ENCODE measurements at regions of chr4 and their contacts with region 1.

Region 1: GRCh38 chr4:186845137-186845842 is 121.6 kb upstream of the FAT1 start:
- DNase-seq: peak; percentile 95
- H3K4me3 ChIP-seq: peak overlapping the region in 1 of 3 experiments; percentile 34
- H3K27ac ChIP-seq: peak overlapping the region; percentile 95
- H3K4me1 ChIP-seq: peaks cover 31% of the 10 kb centered on the region
- H3K27me3 ChIP-seq: no peaks in the 10 kb centered on the region
- CTCF ChIP-seq: no peak
- POLR2A ChIP-seq: peak; percentile 18

Region 2: DNA sequence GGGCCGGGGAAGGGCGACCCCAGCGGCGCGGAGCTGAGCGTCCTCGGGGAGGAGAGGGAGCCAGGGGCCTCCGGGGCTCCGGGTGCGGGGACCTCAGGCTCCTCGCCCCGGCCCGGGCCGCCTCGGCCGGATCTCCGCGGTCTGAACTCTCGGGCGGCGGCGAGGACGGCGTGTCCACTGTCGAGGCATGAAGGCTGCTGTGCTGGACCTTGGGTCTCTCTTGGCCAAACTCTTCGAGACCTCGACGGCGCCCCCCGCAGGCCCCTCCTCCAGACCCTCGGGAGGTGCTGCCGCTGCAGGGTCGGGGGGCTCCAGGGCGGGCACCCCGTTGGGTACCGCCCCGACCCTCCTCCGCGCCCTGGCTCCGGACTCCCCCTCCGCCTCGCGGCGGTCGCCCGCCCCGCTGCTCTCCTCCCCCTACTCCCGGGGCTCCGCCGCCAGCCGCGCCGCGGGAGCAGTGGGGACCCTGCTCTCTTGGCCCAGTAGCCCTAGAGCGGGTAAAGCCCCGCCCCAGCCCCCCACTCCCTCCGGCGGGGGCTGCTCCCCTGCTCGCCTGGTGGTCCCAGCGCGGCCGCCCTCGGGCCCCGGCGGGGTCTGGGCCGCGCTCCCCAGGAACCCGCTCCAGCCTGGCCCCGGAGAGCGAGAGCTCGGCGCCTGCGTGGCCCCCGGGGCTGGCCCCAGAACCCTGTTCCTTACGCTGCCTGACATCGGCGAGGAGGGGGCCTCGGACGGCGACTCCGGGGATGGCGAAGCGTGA is 740.2 kb before region 1 on chr4:
- CTCF ChIA-PET with region 1: no interaction called
- POLR2A ChIA-PET with region 1: no interaction called
- dilution Hi-C with region 1: no loop called
- intact Hi-C with region 1: no loop called
- DNase-seq: no peak
- H3K4me3 ChIP-seq: peak overlapping the region in 2 of 3 experiments; percentile 12 to 26
- H3K27ac ChIP-seq: no peak overlapping the region
- H3K4me1 ChIP-seq: peaks cover 3% of the 10 kb centered on the region
- H3K27me3 ChIP-seq: peaks cover 28 to 33% of the 10 kb centered on the region in 2 experiments
- CTCF ChIP-seq: no peak
- POLR2A ChIP-seq: no peak

Region 3: GRCh38 chr4:186876961-186877626 is 31.8 kb after region 1 on chr4:
- CTCF ChIA-PET with region 1: no interaction called
- POLR2A ChIA-PET with region 1: no interaction called
- dilution Hi-C with region 1: no loop called
- intact Hi-C with region 1: loop called (anchors 2 kb)
- DNase-seq: peak; percentile 54
- H3K4me3 ChIP-seq: no peak overlapping the region
- H3K27ac ChIP-seq: no peak overlapping the region
- H3K4me1 ChIP-seq: no peaks in the 10 kb centered on the region
- H3K27me3 ChIP-seq: no peaks in the 10 kb centered on the region
- CTCF ChIP-seq: no peak
- POLR2A ChIP-seq: no peak

Region 4: DNA sequence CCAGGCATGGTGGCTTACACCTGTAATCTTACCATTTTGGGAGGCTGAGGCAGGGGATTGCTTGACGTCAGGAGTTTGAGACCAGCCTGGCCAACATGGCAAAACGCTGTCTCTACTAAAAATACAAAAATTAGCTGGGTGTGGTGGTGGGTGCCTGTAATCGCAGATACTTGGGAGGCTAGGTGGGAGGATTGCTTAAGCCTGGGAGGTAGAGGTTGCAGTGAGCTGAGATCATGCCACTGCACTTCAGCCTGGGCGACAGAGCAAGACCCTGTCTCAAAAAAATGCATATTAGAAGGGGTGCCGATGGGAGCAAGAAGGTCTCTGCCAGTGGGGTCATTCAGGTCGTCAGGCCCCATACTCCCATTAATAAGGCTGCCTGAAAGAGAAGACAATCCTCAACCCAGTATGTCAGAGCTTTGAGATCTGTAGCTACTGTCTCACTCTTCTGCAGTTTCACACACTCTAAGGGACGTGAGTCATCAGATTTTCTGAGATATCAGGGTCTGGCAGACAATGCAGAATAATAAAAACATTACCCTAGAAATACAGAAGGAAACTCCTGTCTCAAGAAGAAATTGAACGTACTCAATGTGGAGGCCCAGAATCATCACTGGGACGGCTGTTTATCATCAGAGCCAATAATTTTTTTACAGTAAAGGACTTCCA is 55.1 kb after region 1 on chr4:
- CTCF ChIA-PET with region 1: no interaction called
- POLR2A ChIA-PET with region 1: no interaction called
- dilution Hi-C with region 1: no loop called
- intact Hi-C with region 1: loop called (anchors 1 kb)
- DNase-seq: peak; percentile 91
- H3K4me3 ChIP-seq: no peak overlapping the region
- H3K27ac ChIP-seq: peak overlapping the region; percentile 96
- H3K4me1 ChIP-seq: peaks cover 18% of the 10 kb centered on the region
- H3K27me3 ChIP-seq: no peaks in the 10 kb centered on the region
- CTCF ChIP-seq: no peak
- POLR2A ChIP-seq: no peak

Region 5: GRCh38 chr4:186936496-186937375 is 91.4 kb after region 1 on chr4:
- CTCF ChIA-PET with region 1: no interaction called
- POLR2A ChIA-PET with region 1: no interaction called
- dilution Hi-C with region 1: no loop called
- intact Hi-C with region 1: loop called (anchors 2 kb)
- DNase-seq: peak; percentile 55
- H3K4me3 ChIP-seq: peak overlapping the region in 1 of 3 experiments; percentile 30
- H3K27ac ChIP-seq: no peak overlapping the region
- H3K4me1 ChIP-seq: no peaks in the 10 kb centered on the region
- H3K27me3 ChIP-seq: no peaks in the 10 kb centered on the region
- CTCF ChIP-seq: no peak
- POLR2A ChIP-seq: no peak

Region 6: DNA sequence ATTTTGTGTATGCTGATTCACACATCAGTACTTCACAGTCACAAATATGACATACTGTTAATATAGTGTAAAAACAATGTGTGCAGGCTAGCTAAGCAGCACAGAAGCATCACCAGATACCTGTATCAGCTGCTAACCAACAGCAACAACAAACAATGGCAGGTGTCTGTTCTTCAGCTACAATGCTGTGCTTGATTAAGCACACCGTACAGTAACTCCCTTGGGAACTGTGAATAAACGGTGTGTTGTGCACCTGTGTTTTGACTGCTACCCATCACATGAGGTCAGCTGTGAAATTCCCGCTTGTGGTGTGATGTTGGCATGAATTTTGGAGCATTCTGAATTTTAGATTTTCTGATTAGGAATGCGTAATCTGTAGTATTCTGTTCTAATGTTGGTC is 258.1 kb after region 1 on chr4:
- CTCF ChIA-PET with region 1: no interaction called
- POLR2A ChIA-PET with region 1: no interaction called
- dilution Hi-C with region 1: no loop called
- intact Hi-C with region 1: no loop called
- DNase-seq: no peak
- H3K4me3 ChIP-seq: no peak overlapping the region
- H3K27ac ChIP-seq: no peak overlapping the region
- H3K4me1 ChIP-seq: no peaks in the 10 kb centered on the region
- H3K27me3 ChIP-seq: no peaks in the 10 kb centered on the region
- CTCF ChIP-seq: no peak
- POLR2A ChIP-seq: no peak